A673 (cell line): ENCODE measurements at regions of chr5 and their contacts with region 1.

Region 1: DNA sequence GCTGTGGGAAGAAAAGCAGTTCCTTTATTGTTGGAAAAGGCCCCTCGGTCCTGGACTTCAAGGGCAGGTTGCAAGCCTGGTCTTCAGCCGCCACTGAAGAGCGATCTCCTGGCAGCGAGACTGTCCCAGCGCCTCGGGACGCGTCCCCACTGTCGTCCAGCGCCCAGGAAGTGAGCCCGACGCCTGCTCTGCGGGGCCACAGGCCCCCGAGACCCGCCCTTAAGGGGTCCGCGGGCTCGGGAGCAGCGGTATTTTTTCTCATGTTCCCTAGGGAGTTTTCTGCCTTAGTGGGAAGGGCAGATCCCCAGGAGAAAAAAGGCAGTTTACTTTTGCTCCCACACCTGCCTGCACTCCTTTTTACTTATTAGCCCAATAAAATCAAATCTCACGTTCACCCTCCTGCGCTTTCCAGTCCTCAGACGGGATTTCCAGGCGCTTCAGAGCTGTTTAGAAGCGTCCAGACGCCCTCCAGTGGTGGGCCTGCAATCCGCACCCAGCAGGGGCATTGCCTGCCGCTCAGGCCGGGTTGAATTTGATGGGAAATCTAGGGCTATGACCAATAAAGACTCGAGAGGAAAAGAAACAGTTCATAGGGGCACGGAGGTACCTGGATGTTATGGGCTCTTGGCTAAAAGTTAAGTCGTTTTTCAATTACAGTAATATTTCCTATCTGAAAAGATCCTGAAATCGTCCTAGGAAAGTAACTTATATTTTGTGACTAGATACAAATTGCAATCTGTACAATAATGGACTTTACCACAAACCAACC is 2.8 kb upstream of the EFNA5 start:
- DNase-seq: peak; percentile 93
- H3K4me3 ChIP-seq: peak overlapping the region; percentile 65
- H3K27ac ChIP-seq: peak overlapping the region; percentile 47
- H3K4me1 ChIP-seq: peaks cover 4% of the 10 kb centered on the region
- H3K27me3 ChIP-seq: no peaks in the 10 kb centered on the region
- CTCF ChIP-seq: peak; percentile 99

Region 2: GRCh38 chr5:106269252-106269843 is 1404.2 kb before region 1 on chr5:
- CTCF ChIA-PET with region 1: no interaction called
- POLR2A ChIA-PET with region 1: no interaction called
- intact Hi-C with region 1: loop called (anchors 5 kb)
- DNase-seq: peak; percentile 65
- H3K4me3 ChIP-seq: no peak overlapping the region
- H3K27ac ChIP-seq: no peak overlapping the region
- H3K4me1 ChIP-seq: no peaks in the 10 kb centered on the region
- H3K27me3 ChIP-seq: no peaks in the 10 kb centered on the region
- CTCF ChIP-seq: peak; percentile 69

Region 3: DNA sequence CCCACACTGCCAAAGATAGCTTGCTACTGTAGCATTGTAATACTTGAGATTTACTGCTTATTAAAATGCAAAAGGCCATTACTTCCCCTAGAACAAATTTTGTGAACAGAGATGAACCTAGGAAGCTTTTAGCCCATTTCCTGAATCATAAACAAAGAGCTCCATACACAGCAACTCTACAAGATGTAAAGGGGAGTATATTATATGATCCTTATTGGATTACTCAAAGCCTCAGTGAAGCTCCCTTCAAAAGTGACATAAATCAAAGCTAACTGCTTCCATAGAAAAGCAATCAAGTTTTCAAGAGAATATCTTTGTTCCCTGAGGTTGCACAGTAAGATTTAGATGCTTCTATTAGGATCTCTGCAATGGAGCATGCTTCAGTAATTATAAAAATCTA is 632.6 kb before region 1 on chr5:
- CTCF ChIA-PET with region 1: no interaction called
- POLR2A ChIA-PET with region 1: no interaction called
- intact Hi-C with region 1: loop called (anchors 10 kb)
- DNase-seq: peak; percentile 95
- H3K4me3 ChIP-seq: no peak overlapping the region
- H3K27ac ChIP-seq: no peak overlapping the region
- H3K4me1 ChIP-seq: peaks cover 16% of the 10 kb centered on the region
- H3K27me3 ChIP-seq: peaks cover 81% of the 10 kb centered on the region
- CTCF ChIP-seq: no peak

Region 4: GRCh38 chr5:107248066-107248695 is 425.4 kb before region 1 on chr5:
- CTCF ChIA-PET with region 1: no interaction called
- POLR2A ChIA-PET with region 1: no interaction called
- intact Hi-C with region 1: loop called (anchors 10 kb)
- DNase-seq: peak; percentile 80
- H3K4me3 ChIP-seq: no peak overlapping the region
- H3K27ac ChIP-seq: no peak overlapping the region
- H3K4me1 ChIP-seq: peaks cover 4% of the 10 kb centered on the region
- H3K27me3 ChIP-seq: no peaks in the 10 kb centered on the region
- CTCF ChIP-seq: peak; percentile 95

Region 5: DNA sequence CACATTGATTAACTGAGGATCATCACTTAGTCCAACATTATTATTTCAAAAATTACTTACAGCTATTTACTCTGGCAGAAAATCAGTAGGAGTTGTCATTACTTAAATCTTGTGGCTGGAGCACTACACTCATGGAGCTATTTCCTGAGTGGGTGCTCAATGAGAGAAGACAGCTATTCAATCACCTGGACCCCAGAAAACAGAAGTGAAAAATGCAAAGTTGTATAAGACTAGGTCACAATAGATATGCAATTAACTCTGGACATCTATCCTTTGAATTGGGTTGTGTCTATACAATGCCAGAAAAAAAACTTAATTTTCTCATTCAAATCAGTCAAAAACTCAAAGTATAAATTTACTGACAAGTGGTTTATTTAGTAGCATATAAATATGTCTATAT is 343.7 kb before region 1 on chr5:
- CTCF ChIA-PET with region 1: no interaction called
- POLR2A ChIA-PET with region 1: no interaction called
- intact Hi-C with region 1: no loop called
- DNase-seq: no peak
- H3K4me3 ChIP-seq: no peak overlapping the region
- H3K27ac ChIP-seq: no peak overlapping the region
- H3K4me1 ChIP-seq: no peaks in the 10 kb centered on the region
- H3K27me3 ChIP-seq: no peaks in the 10 kb centered on the region
- CTCF ChIP-seq: no peak

Region 6: GRCh38 chr5:107389130-107389774 is 284.3 kb before region 1 on chr5:
- CTCF ChIA-PET with region 1: no interaction called
- POLR2A ChIA-PET with region 1: no interaction called
- intact Hi-C with region 1: loop called (anchors 5 kb)
- DNase-seq: peak; percentile 88
- H3K4me3 ChIP-seq: no peak overlapping the region
- H3K27ac ChIP-seq: no peak overlapping the region
- H3K4me1 ChIP-seq: peaks cover 31% of the 10 kb centered on the region
- H3K27me3 ChIP-seq: no peaks in the 10 kb centered on the region
- CTCF ChIP-seq: no peak; the same call in 1 of the 2 replicates

Region 7: DNA sequence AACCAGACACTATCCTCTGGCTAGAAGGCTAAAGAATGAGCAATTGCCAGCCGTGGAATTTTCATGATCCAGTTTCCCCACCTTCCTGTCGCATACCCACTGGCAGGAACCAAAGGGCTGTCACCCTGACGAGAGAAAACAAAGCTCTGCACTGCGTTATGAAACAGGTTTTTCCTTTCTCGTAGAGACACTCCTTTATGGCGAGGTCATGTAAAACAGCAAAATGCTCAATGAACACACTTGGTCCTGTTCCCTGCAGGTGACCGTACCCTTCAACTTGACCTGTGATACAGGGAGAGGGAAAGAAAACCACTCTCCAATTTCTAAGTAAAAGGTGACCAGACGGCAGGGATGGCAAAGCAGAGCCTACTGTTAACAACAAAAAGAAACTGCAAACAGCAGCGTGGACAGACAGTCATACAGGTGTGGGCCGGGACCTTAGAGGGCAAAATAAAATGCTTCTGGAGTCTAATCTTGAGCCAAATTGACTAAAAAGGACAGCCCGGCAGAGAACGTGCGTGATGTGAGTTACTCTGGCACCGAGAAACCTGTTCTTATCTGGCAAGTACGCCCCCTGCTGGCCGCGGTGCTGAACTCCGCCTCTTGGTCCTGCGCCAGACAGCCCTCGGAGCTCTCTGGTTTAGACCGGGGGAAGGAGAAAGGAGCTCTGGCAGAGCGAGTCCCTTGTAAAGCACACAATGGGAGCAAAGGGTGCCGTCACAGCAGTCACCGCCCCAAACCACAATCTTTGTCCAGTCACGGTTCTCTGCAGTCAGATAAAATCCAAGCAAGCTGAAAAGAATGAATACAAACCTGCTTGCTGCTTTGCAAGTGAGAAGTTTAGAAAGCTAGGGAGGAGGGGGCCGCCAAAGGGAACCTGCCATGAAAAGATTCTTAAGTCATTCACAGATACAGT is 101.7 kb before region 1 on chr5:
- CTCF ChIA-PET with region 1: interaction called, 6 read pairs
- POLR2A ChIA-PET with region 1: no interaction called
- intact Hi-C with region 1: loop called (anchors 5 kb)
- DNase-seq: peak; percentile 95
- H3K4me3 ChIP-seq: peak overlapping the region; percentile 21
- H3K27ac ChIP-seq: no peak overlapping the region
- H3K4me1 ChIP-seq: peaks cover 43% of the 10 kb centered on the region
- H3K27me3 ChIP-seq: peaks cover 19% of the 10 kb centered on the region
- CTCF ChIP-seq: peak; percentile 96

Region 8: GRCh38 chr5:108687595-108688200 is 1014.1 kb after region 1 on chr5:
- CTCF ChIA-PET with region 1: no interaction called
- POLR2A ChIA-PET with region 1: no interaction called
- intact Hi-C with region 1: no loop called
- DNase-seq: no peak
- H3K4me3 ChIP-seq: no peak overlapping the region
- H3K27ac ChIP-seq: no peak overlapping the region
- H3K4me1 ChIP-seq: no peaks in the 10 kb centered on the region
- H3K27me3 ChIP-seq: no peaks in the 10 kb centered on the region
- CTCF ChIP-seq: no peak